ENCODE measurements at regions of chr1 and their contacts with region 1.

Region 1: GRCh38 chr1:220123889-220124288 is 30.0 kb downstream of the IARS2 start:
- DNase-seq: peak; percentile 48
- ATAC-seq: no peak
- H3K4me3 Mint-ChIP-seq: no peak overlapping the region
- H3K27ac Mint-ChIP-seq: no peak overlapping the region
- H3K4me1 Mint-ChIP-seq: peaks cover 11% of the 10 kb centered on the region
- H3K27me3 Mint-ChIP-seq: no peaks in the 10 kb centered on the region
- CTCF ChIP-seq: peak; percentile 20

Region 2: DNA sequence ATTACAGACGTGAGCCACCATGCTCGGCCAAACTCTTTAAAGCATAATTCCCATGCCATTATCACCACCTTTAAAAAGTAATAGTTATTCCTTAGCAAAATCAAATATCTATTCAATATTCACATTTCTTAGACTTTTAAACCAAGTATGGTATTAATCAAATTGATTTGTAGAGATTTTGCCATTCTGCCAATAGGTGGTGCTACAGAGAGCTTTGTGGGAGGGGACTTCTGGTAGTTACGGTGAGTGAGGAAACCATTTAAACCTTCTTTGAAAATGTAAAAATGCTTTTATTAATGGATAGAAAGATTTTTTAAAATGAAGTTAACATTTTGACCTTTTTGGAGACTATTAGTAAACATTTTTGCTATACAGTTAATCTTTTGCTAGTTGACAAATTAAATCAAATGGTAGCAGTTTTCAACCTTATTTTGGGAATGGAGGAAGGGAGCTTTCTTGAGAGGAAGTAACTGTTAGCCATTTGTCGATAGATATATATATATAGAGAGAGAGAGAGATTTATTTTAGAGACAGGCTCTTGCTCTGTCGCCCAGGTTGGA is 10.7 kb before region 1 on chr1:
- CTCF ChIA-PET with region 1: interaction called, 10 read pairs
- POLR2A ChIA-PET with region 1: interaction called, 4 read pairs
- intact Hi-C with region 1: no loop called
- DNase-seq: peak; percentile 23
- ATAC-seq: peak; percentile 81
- H3K4me3 Mint-ChIP-seq: no peak overlapping the region
- H3K27ac Mint-ChIP-seq: no peak overlapping the region
- H3K4me1 Mint-ChIP-seq: peaks cover 3% of the 10 kb centered on the region
- H3K27me3 Mint-ChIP-seq: no peaks in the 10 kb centered on the region
- CTCF ChIP-seq: peak; percentile 81

Region 3: GRCh38 chr1:220151454-220151853 is 27.6 kb after region 1 on chr1:
- CTCF ChIA-PET with region 1: no interaction called
- POLR2A ChIA-PET with region 1: no interaction called
- intact Hi-C with region 1: no loop called
- DNase-seq: no peak
- ATAC-seq: no peak
- H3K4me3 Mint-ChIP-seq: no peak overlapping the region
- H3K27ac Mint-ChIP-seq: no peak overlapping the region
- H3K4me1 Mint-ChIP-seq: no peaks in the 10 kb centered on the region
- H3K27me3 Mint-ChIP-seq: no peaks in the 10 kb centered on the region
- CTCF ChIP-seq: no peak

Measured in activated CD8-positive, alpha-beta T cell treated with anti-CD3 and anti-CD28 coated beads for 36 hours (primary cell).